ENCODE measurements at regions of chr7 and their contacts with region 1.

Region 1: GRCh38 chr7:135645296-135645904 is 16.9 kb upstream of the STMP1 start:
- DNase-seq: no peak
- H3K4me3 ChIP-seq: no peak overlapping the region
- CTCF ChIP-seq: peak; percentile 52

Region 2: GRCh38 chr7:135616136-135616535 is 29.3 kb before region 1 on chr7:
- CTCF ChIA-PET with region 1: interaction called, 319 read pairs
- POLR2A ChIA-PET with region 1: no interaction called
- DNase-seq: no peak
- H3K4me3 ChIP-seq: no peak overlapping the region
- CTCF ChIP-seq: no peak

Region 3: GRCh38 chr7:135704074-135704473 is 58.7 kb after region 1 on chr7:
- CTCF ChIA-PET with region 1: no interaction called
- POLR2A ChIA-PET with region 1: no interaction called
- DNase-seq: no peak
- H3K4me3 ChIP-seq: no peak overlapping the region
- CTCF ChIP-seq: peak; percentile 5